Mammary epithelial cell (primary cell): ENCODE measurements at regions of chr2 and their contacts with region 1.

Region 1: DNA sequence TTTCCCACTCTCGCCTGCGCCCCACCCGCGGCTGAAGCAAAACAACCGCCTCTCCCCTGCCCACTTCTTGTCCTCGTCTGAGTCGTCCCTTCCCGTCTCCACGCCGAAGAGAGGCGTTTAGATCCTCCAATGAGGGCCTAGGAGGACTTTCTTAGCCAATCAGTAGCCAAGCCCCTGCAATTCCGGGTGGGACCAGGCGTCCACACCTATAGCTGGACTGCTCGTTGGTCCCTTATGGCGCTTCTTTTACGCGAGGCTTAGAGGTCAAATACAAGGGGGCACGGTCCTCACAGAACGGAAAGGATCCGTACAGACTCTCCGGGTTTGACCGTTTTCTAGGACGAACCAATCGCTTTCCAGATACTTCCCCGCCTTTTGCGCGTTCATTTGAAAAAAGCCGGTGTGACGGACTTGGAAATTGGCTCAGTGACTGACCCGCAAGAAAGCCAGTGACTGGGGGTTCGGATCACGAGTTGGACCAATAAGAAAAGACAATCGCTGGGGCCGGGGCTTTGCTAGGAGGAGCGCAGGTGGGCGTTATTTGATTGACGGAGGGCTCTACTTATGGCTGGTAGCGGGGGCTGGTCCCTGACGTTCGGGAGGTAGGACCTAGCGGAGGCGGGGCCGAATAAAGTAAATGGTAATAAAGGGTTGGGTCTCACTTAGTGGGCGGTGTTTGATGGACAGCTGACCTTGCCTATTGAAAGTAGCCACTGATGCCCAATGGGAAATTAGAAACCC is 565 bp upstream of the PPM1B start:
- DNase-seq: peak; percentile 100
- H3K4me3 ChIP-seq: peak overlapping the region; percentile 47 to 71 (median 51)
- H3K27ac ChIP-seq: peak overlapping the region; percentile 89
- H3K4me1 ChIP-seq: peaks cover 10% of the 10 kb centered on the region
- H3K27me3 ChIP-seq: no peaks in the 10 kb centered on the region
- CTCF ChIP-seq: no peak

Region 2: DNA sequence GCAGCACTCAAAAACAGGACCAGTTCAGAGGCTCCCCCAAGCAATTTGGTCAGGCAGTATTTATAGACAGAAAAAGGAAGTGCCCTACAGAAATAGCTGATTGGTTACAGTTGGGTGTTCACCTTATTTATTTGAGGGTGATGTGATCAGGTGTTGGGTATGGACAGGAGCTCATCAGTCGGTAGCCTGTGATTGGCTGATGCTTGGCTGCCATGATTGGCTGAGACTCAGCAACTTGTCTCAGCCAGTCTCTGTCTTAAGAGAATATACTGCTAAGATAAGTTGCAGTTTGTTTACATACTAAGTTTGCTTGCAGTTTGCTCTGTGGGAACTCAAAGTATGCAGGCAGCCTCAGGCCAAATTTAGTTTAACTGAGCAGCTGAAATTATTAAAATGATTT is 319.9 kb before region 1 on chr2:
- CTCF ChIA-PET with region 1: no interaction called
- dilution Hi-C with region 1: no loop called
- in situ Hi-C with region 1: no loop called
- intact Hi-C with region 1: no loop called
- DNase-seq: no peak
- H3K4me3 ChIP-seq: no peak overlapping the region
- H3K27ac ChIP-seq: no peak overlapping the region
- H3K4me1 ChIP-seq: no peaks in the 10 kb centered on the region
- H3K27me3 ChIP-seq: peaks cover 2% of the 10 kb centered on the region
- CTCF ChIP-seq: no peak

Region 3: DNA sequence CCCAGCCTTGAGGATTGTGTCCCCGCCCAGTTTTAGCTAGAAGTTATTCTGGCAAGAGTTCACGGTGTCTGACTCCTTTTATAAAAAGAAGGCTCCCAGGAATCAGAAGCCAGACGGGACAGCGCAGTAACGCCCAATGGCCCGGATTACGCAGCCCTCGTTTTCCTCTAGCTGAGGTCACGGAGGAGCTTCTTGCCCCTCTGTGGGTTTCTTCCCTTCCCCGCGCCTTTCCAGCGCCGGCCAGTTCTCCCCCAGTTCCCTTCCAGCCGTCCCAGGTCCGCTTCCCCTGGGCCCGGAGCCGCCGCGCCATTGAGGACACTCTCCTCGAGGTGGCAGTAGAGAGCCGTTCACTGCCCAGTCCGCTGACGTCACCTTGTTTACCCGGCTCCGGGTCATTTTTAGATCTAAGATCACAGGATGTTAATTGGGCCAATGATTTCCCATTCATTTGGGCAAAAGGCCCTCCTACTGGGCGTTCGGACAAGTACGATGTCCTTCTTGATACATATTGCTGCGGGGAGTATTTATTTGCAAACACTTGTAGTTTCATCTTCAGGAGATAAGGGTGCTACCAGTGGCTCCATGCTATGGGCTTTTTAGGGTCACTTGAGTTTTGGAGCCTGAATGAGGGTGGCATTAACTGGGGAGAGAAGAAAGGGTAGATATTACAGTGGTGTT is 80.9 kb before region 1 on chr2:
- CTCF ChIA-PET with region 1: no interaction called
- dilution Hi-C with region 1: no loop called
- in situ Hi-C with region 1: no loop called
- intact Hi-C with region 1: loop called (anchors 1 kb)
- DNase-seq: peak; percentile 56
- H3K4me3 ChIP-seq: peak overlapping the region in 1 of 3 experiments; percentile 16
- H3K27ac ChIP-seq: no peak overlapping the region
- H3K4me1 ChIP-seq: no peaks in the 10 kb centered on the region
- H3K27me3 ChIP-seq: no peaks in the 10 kb centered on the region
- CTCF ChIP-seq: peak; percentile 86 to 94

Region 4: GRCh38 chr2:44120428-44120827 is 47.7 kb before region 1 on chr2:
- CTCF ChIA-PET with region 1: no interaction called
- dilution Hi-C with region 1: no loop called
- in situ Hi-C with region 1: no loop called
- intact Hi-C with region 1: loop called (anchors 2 kb)
- DNase-seq: peak; percentile 86
- H3K4me3 ChIP-seq: no peak overlapping the region
- H3K27ac ChIP-seq: no peak overlapping the region
- H3K4me1 ChIP-seq: peaks cover 9% of the 10 kb centered on the region
- H3K27me3 ChIP-seq: no peaks in the 10 kb centered on the region
- CTCF ChIP-seq: no peak

Region 5: DNA sequence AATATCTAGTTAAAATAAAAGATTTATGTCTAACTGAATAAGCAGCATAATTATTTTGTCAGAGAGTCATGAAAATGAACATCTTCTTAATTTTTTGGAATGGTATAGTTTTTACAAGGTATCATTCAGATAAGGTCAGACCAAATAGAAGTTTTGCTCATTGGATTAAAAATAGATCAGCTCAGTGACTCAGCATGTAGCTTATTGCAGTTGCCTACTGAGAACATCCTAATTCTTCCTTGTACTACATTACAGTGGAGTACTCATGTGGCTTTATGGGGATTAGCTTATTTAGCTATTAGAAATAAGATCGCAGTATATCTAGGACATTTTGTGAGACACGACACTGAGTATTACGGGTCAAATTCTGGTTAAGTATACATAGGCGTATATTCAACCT is 37.7 kb before region 1 on chr2:
- CTCF ChIA-PET with region 1: no interaction called
- dilution Hi-C with region 1: no loop called
- in situ Hi-C with region 1: no loop called
- intact Hi-C with region 1: no loop called
- DNase-seq: no peak
- H3K4me3 ChIP-seq: no peak overlapping the region
- H3K27ac ChIP-seq: no peak overlapping the region
- H3K4me1 ChIP-seq: peaks cover 5% of the 10 kb centered on the region
- H3K27me3 ChIP-seq: no peaks in the 10 kb centered on the region
- CTCF ChIP-seq: no peak

Region 6: DNA sequence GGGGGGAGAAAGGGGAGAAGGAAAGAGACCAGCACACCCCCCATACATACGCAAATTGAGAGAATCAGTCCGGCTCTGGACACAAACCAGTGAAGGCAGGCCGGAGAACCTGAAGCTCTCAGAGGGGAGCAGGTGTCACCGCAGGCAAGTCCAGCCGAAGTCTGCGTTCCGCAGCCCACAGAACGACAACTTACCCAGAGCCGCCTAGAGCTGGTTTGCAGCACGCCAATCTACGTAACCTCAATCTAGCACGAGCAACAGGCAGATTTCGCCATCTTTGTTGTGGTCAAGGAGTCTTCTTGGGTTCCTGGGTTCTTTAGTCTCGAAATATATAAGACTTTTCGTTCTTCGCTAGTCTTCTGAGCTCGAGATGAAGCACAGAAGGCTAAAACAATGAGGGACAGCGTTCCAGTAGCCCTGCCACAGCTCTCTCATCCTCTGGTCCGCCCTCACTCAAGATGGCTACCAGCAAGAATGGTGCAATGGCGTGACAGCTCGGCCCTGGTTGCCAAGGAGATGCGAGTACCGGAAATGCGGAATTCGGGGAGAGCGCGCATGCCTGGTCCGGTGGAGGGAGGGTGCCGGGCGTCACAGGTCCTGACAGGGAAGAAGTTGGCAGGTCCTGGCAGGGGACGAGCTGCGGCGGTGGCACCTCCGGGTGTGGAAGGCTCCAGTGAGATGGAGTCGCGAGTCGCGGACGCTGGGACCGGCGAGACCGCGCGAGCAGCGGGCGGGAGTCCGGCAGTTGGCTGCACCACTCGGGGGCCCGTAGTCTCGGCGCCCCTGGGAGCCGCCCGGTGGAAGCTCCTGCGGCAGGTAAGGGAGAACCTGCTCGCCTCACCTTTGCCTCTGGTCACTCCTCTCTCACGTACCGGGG is 193.5 kb after region 1 on chr2 and contains the starts of genes CAMKMT and PREPL:
- CTCF ChIA-PET with region 1: no interaction called
- dilution Hi-C with region 1: no loop called
- in situ Hi-C with region 1: no loop called
- intact Hi-C with region 1: loop called (anchors 2 kb)
- DNase-seq: peak; percentile 96
- H3K4me3 ChIP-seq: peak within 1 kb of the TSS; percentile 60 to 85 (median 69)
- H3K27ac ChIP-seq: peak within 1 kb of the TSS; percentile 100
- H3K4me1 ChIP-seq: peaks cover 12% of the 10 kb centered on the region
- H3K27me3 ChIP-seq: no peaks in the 10 kb centered on the region
- CTCF ChIP-seq: no peak
- total RNA-seq, gene CAMKMT: 13.5 to 16.5 TPM
- total RNA-seq, gene PREPL: 28.2 to 31.0 TPM